ENCODE measurements at regions of chr1 and their contacts with region 1.

Region 1: DNA sequence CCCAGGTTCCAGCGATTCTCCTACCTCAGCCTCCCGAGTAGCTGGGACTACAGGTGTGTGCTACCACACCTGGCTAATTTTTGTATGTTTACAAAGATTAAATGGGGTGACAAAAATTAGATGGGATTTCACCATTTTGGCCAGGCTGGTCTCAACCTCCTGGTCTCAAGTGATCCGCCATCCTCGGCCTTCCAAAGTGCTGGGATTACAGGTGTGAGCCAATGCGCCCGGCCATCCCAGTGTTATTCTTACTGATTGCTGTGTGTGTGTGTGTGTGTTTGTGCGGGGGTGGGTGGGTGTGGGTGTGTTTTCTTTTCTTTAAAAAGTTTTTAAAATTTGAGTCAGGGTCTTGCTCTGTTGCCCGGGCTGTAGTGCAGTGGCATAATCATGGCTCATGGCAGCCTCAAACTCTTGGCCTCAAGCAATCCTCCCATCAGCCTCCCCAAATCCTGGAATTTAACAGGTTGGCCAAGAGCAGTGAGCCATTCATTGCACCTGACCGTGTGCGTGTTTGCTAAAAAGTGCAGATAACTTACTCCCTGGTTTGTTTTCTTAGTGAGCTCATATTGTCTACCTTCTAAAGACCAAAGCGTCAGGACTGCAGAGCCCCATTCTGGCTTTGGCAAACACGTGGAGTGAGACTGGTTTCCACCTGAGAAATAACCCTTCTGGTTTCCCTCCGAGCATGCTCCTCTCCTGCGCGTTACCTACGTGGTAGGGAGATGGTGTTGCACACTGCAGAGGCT is 32.4 kb upstream of the CA6 start:
- DNase-seq: no peak
- ATAC-seq: no peak
- H3K4me3 ChIP-seq: no peak overlapping the region
- H3K4me3 Mint-ChIP-seq: no peak overlapping the region
- H3K27ac ChIP-seq: no peak overlapping the region
- H3K27ac Mint-ChIP-seq: peak overlapping the region in 2 of 9 donors; percentile 3 to 20
- H3K4me1 ChIP-seq: peaks cover 0 to 2% of the 10 kb centered on the region in 2 donors
- H3K4me1 Mint-ChIP-seq: peaks cover 4 to 36% (median 5%) of the 10 kb centered on the region in 7 donors
- H3K27me3 ChIP-seq: no peaks in the 10 kb centered on the region
- H3K27me3 Mint-ChIP-seq: peaks cover 0 to 4% (median 0%) of the 10 kb centered on the region in 5 donors

Region 2: DNA sequence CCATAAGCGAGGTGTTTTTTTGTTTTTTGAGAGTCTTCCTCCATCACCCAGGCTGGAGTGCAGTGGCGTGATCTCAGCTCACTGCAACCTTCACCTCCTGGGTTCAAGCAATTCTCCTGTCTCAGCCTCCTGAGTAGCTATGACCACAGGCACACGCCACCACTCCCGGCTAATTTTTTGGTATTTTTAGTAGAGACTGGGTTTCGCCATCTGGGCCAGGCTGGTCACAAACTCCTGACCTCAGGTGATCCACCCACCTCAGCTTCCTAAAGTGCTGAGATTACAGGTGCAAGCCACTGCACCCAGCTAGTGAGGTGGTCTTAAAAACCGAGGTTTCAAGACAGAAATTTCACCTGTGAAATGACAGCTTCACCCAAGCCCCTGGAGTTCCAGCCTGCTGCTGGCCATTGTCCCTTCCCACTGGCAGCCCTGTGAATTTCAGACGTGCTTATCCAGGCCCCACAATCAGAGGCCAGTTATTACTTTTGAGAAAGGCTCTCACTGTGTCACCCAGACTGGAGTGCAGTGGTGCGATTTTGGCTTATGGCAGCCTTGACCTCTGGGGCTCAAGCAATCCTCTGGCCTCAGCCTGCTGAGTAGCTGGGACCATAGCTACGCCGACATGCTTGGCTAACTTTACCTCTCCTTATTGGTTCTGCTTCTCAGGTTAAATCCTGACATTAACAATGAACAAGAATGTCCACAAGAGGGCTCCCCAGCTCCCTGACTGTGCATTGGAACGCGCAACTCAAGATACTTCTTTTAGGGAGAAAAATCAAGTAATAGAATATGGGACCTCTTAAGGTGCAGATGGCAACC is 54.2 kb before region 1 on chr1:
- CTCF ChIA-PET with region 1: interaction called, 3 read pairs
- POLR2A ChIA-PET with region 1: no interaction called
- intact Hi-C with region 1: loop called in 1 of 2 experiments (anchors 1 kb)
- DNase-seq: peak in 7 of 9 donors; percentile 52 to 73 (median 61)
- ATAC-seq: peak; percentile 83
- H3K4me3 ChIP-seq: no peak overlapping the region
- H3K4me3 Mint-ChIP-seq: peak overlapping the region in 1 of 10 donors; percentile 61
- H3K27ac ChIP-seq: no peak overlapping the region
- H3K27ac Mint-ChIP-seq: peak overlapping the region; percentile 45 to 89 (median 78)
- H3K4me1 ChIP-seq: no peaks in the 10 kb centered on the region
- H3K4me1 Mint-ChIP-seq: peaks cover 0 to 48% (median 10%) of the 10 kb centered on the region in 7 donors
- H3K27me3 ChIP-seq: no peaks in the 10 kb centered on the region
- H3K27me3 Mint-ChIP-seq: no peaks in the 10 kb centered on the region

Region 3: GRCh38 chr1:8947127-8947691 is 33.9 kb after region 1 on chr1:
- CTCF ChIA-PET with region 1: interaction called, 3 read pairs
- POLR2A ChIA-PET with region 1: interaction called, 6 read pairs
- intact Hi-C with region 1: loop called in 1 of 2 experiments (anchors 2 kb)
- DNase-seq: peak in 2 of 9 donors; percentile 19 to 36
- ATAC-seq: no peak
- H3K4me3 ChIP-seq: no peak overlapping the region
- H3K4me3 Mint-ChIP-seq: peak overlapping the region; percentile 21 to 80 (median 61)
- H3K27ac ChIP-seq: peak overlapping the region; percentile 57
- H3K27ac Mint-ChIP-seq: peak overlapping the region; percentile 68 to 98 (median 90)
- H3K4me1 ChIP-seq: peaks cover 16 to 68% of the 10 kb centered on the region in 2 donors
- H3K4me1 Mint-ChIP-seq: peaks cover 42 to 82% (median 61%) of the 10 kb centered on the region in 7 donors
- H3K27me3 ChIP-seq: no peaks in the 10 kb centered on the region
- H3K27me3 Mint-ChIP-seq: no peaks in the 10 kb centered on the region

Region 4: DNA sequence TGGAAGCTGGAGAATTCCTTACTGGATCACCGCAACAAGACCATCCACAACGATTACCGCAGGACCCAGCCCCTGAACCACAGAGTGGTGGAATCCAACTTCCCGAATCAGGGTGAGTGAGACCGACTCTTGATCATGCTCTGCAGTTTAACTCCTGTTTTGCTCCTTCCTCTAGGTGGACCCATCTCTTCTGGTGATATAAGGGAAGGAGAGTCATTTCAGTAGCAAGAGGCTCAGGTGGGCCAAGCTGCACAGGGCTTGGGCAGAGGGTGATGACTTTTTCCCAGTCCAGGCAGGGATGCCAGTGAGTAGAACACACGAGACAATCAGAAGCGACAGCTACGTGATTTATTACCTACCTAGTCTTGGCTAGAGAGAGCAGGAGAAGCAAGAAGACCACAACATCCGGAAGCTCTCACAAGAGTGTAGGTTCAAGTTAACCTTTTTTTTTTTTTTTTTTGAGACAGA is 57.6 kb after region 1 on chr1:
- CTCF ChIA-PET with region 1: interaction called, 18 read pairs
- POLR2A ChIA-PET with region 1: interaction called, 66 read pairs
- intact Hi-C with region 1: loop called (anchors 1 kb)
- DNase-seq: peak in 8 of 9 donors; percentile 59 to 84 (median 76)
- ATAC-seq: peak; percentile 91
- H3K4me3 ChIP-seq: peak overlapping the region; percentile 59
- H3K4me3 Mint-ChIP-seq: peak overlapping the region; percentile 94 to 100 (median 100)
- H3K27ac ChIP-seq: peak overlapping the region; percentile 87
- H3K27ac Mint-ChIP-seq: peak overlapping the region; percentile 89 to 99 (median 98)
- H3K4me1 ChIP-seq: peaks cover 7 to 22% of the 10 kb centered on the region in 2 donors
- H3K4me1 Mint-ChIP-seq: peaks cover 34 to 60% (median 52%) of the 10 kb centered on the region in 7 donors
- H3K27me3 ChIP-seq: no peaks in the 10 kb centered on the region
- H3K27me3 Mint-ChIP-seq: no peaks in the 10 kb centered on the region

Region 5: DNA sequence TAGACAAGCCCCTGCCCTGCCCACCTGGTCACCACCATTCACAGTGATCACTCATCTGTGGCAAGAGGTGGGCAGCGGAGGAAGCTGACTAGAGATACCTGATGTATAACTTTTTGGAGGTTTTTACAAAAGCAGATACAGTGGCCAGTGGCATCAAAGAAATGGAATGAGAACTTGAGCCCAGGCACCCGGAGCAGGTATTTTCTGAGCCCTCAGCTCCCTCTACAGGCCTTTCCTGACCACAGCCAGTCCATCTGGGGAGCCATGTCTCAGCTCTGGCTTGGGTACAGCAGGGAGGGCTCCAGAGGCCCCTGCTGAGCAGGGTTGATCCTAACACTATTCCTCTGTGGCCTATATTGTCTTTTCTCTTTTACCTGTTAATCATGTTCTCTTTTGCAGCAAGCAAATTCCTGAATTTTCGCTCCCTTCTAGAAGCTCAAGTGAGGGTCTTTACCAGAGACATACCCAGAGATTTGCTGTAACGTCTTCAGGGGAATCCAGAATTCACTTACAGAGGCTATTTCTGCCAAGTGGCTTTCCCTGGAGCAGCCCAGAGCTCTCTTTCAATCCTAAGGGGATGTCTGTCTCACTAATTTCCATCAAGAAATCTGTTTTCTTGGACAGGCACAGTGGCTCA is 188.3 kb after region 1 on chr1:
- CTCF ChIA-PET with region 1: no interaction called
- POLR2A ChIA-PET with region 1: no interaction called
- intact Hi-C with region 1: loop called (anchors 2 kb)
- DNase-seq: peak in 1 of 9 donors; percentile 16
- ATAC-seq: peak; percentile 64
- H3K4me3 ChIP-seq: no peak overlapping the region
- H3K4me3 Mint-ChIP-seq: no peak overlapping the region
- H3K27ac ChIP-seq: no peak overlapping the region
- H3K27ac Mint-ChIP-seq: no peak overlapping the region
- H3K4me1 ChIP-seq: no peaks in the 10 kb centered on the region
- H3K4me1 Mint-ChIP-seq: no peaks in the 10 kb centered on the region
- H3K27me3 ChIP-seq: no peaks in the 10 kb centered on the region
- H3K27me3 Mint-ChIP-seq: no peaks in the 10 kb centered on the region

Measured in naive thymus-derived CD4-positive, alpha-beta T cell (primary cell).